ENCODE measurements at regions of chr10 and their contacts with region 1.

Region 1: DNA sequence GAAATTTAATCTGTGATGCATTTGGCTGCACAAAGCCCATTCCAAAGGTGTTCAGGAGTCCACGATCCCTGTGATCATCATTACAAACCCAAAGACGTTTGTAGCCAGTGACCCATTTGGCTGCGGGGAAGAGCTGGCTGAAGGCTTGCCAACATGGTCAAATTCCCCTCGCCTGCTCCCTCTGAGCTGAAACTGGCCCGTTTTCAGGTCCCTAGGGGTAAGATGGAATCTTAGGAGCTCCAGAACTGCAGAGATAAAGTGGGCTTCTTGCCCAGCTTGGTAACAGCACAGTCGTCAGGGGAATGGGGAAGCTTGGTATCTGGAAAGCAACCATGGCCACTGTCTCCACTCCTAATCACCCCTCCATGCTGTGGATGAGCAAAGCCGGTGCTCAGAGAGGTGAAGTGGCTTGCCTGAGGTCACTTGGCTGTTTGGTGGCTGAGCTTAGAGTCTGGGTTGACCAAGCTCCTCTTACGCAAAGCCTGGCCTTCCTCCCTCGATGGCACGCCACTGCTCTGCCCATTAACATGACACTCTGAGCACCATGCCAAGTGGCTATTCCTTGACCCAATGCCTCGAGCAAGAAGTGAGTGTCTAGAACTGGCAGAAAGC is 155.5 kb downstream of the NEURL1 start:
- DNase-seq: no peak
- ATAC-seq: peak in 5 of 8 donors; percentile 3 to 66 (median 16)
- H3K4me3 ChIP-seq: no peak overlapping the region
- H3K27ac ChIP-seq: peak overlapping the region in 4 of 10 donors; percentile 13 to 54 (median 30)
- H3K4me1 ChIP-seq: peaks cover 27 to 93% (median 80%) of the 10 kb centered on the region in 9 donors
- H3K27me3 ChIP-seq: no peaks in the 10 kb centered on the region
- CTCF ChIP-seq: no peak

Region 2: DNA sequence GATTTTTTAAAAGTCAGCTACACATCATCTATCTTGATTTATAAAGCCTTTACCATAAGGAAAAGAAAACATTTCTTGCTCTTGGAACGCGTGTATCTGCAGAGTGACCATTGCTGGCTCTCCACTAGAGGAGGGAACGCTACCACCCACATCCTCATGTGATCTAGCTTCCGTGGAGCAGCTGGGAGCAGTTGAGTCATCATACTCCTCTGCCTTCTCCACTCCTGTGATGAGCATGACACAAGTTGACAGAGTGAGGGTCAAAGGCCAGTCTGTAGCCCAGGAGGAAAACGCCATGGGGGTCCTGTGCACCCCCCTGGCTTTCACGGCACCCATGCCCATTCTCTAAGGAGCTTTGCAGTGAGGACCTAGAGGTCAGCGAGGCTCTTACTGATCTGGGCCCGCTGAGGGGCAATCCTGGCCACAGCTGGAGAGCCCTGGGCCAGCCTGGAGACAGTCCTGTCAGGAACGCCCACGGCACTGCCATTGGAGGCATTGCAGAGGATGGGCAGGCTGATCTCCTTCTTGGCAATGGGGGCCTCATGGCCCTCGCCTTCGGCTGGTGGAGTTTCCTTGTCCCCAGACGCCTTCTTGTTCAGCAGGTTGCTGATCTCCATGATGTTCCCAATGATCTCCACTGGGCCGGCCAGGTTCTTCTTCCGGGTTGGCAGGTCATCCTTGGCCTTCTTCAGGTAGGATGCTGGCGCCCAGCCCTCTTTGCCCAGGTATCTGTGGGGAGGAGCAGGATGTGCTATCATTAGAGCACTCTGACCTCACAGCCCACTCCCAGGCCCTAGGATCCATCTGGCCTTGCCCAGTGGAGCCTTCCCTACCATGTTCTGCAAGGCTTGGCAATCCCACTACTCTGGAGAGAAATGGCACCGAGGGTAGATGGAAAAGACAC is 36.3 kb before region 1 on chr10:
- intact Hi-C with region 1: loop called in 3 of 10 experiments (anchors 5 kb)
- DNase-seq: peak in 1 of 2 donors; percentile 14
- ATAC-seq: peak in 3 of 8 donors; percentile 33 to 46 (median 41)
- H3K4me3 ChIP-seq: no peak overlapping the region
- H3K27ac ChIP-seq: peak overlapping the region in 1 of 10 donors; percentile 3
- H3K4me1 ChIP-seq: peaks cover 18 to 75% (median 46%) of the 10 kb centered on the region in 9 donors
- H3K27me3 ChIP-seq: no peaks in the 10 kb centered on the region
- CTCF ChIP-seq: no peak

Measured in heart right ventricle (tissue), 16 donors.